Posterior vena cava (tissue), 2 donors: ENCODE measurements at regions of chr6 and their contacts with region 1.

Region 1: DNA sequence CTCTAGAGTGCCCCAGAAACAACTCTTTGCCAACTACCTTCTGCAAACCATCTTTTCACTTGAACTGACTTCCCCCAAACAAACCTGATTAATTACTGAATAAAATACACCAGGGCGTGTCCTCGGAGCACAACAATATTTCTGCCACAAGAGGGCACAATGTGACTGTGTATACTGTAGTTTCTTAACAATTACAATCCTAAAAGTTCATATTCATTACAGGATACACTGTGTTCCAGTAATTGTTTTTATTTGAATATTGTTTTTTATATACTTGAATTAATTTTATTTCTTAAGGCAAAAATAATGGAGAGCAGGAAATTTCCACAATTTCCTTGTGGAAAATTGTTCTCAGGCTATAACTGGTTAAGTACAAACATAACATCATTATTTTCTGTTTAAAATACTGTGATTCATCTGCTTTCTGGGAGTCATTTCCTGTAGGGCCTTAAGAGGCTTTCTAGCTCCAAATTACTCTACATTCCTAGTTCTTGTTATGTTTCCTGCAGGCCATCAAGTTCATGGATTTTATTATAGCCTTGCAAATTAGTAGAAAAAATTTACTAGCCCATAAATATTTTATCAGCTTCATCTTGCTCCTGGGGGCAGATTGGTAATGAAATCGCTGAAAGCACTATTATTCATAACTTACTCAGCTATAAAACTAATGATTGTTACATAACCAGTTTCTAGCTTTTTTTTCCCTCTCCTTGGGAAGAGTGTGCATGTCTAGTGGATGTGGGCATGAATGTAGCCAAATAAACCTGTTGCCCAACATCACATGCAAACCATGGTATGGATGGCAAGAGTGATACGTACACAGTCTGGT is 51.9 kb upstream of the SLC22A16 start:
- DNase-seq: no peak

Region 2: GRCh38 chr6:110882271-110882613 is 353.9 kb after region 1 on chr6:
- intact Hi-C with region 1: loop called in 1 of 2 experiments (anchors 10 kb)
- DNase-seq: no peak

Region 3: DNA sequence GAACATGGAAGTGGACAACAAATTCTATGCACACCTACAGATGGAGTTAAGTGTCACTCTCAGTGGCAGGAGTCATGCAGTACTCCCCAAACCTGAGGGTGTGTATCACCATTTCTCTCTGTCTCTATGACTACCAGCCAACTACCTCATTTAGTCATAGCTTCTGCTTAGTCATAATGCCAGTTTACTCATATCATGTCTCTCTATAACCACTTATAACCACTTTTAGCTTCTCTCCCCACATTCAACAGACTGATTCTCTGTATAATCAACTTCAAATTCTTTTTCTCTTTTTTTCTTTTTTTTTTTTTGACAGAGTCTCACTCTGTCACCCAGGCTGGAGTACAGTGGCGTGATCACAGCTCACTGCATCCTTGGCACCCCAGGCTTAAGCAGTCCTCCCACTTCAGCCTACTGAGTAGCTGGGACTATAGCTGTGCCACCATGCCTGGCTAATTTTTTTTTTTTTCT is 416.4 kb after region 1 on chr6:
- intact Hi-C with region 1: loop called in 1 of 2 experiments (anchors 10 kb)
- DNase-seq: no peak

Region 4: GRCh38 chr6:110958329-110959192 is 430.2 kb after region 1 on chr6 and contains the start of gene GTF3C6:
- intact Hi-C with region 1: loop called in 1 of 2 experiments (anchors 10 kb)
- DNase-seq: peak; percentile 98
- total RNA-seq, gene GTF3C6: 56.6 to 63.8 TPM